H1 (cell line): ENCODE measurements at regions of chr22 and their contacts with region 1.

Region 1: GRCh38 chr22:41479671-41480396 is 10.9 kb downstream of the ACO2 start:
- DNase-seq: peak; percentile 21 to 61
- H3K4me3 ChIP-seq: peak overlapping the region in 2 of 4 experiments; percentile 0 to 11; a peak in 2 of 8 replicates
- H3K27ac ChIP-seq: peak overlapping the region; percentile 20; the same call in 1 of the 2 replicates
- H3K4me1 ChIP-seq: peaks cover 24 to 39% (median 26%) of the 10 kb centered on the region in 4 experiments
- H3K27me3 ChIP-seq: no peaks in the 10 kb centered on the region
- CTCF ChIP-seq: peak in 2 of 3 experiments; percentile 28 to 41; a peak in 2 of 4 replicates
- EP300 ChIP-seq: no peak
- POLR2A ChIP-seq: no peak
- RAD21 ChIP-seq: peak; percentile 17 to 21; a peak in 2 of 4 replicates

Region 2: DNA sequence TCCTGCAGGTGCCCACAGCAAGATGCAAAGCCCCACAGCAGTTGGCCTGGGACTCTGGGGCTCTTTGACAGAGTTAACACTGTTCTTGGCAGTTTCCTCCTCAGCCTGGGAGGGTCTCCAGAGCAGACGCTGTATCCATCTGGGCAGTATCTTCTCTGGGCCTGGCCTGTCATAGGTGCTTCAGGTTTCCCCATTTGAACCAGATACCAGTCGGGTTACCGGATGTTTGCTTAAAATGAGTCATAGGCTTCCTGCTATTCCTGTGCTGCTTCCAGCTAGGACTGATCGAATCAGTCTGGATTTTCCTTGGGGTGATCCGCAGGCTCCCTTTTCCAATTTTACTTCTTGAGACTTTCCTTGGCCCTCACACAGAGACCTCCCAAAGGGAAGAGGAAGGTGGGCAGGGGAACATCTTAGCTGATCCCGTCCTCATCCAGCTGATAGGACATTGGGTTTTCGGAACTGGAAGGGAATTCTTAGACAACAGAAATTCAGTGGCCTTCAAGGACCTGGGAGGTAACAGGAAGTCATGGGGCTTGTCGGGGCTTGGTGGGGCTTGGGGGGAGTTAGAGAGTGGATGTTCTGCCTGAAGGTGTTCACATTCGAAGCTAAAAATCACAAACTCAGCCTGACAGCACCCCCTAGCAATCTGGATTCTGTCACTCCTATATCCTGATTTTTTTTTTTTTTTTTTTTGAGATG is 191.4 kb before region 1 on chr22:
- CTCF ChIA-PET with region 1: no interaction called
- POLR2A ChIA-PET with region 1: no interaction called
- DNase-seq: no peak
- H3K4me3 ChIP-seq: no peak overlapping the region
- H3K27ac ChIP-seq: peak overlapping the region; percentile 55; the same call in 1 of the 2 replicates
- H3K4me1 ChIP-seq: peaks cover 2 to 20% (median 10%) of the 10 kb centered on the region in 4 experiments; a peak in 6 of 7 replicates
- H3K27me3 ChIP-seq: no peaks in the 10 kb centered on the region
- CTCF ChIP-seq: no peak
- EP300 ChIP-seq: no peak
- POLR2A ChIP-seq: no peak
- RAD21 ChIP-seq: no peak

Region 3: GRCh38 chr22:41320416-41321240 is 159.2 kb before region 1 on chr22:
- CTCF ChIA-PET with region 1: no interaction called
- POLR2A ChIA-PET with region 1: no interaction called
- DNase-seq: no peak
- H3K4me3 ChIP-seq: no peak overlapping the region
- H3K27ac ChIP-seq: no peak overlapping the region
- H3K4me1 ChIP-seq: no peaks in the 10 kb centered on the region
- H3K27me3 ChIP-seq: no peaks in the 10 kb centered on the region
- CTCF ChIP-seq: no peak
- EP300 ChIP-seq: no peak
- POLR2A ChIP-seq: no peak
- RAD21 ChIP-seq: no peak

Region 4: GRCh38 chr22:41501209-41501608 is 21.4 kb after region 1 on chr22:
- CTCF ChIA-PET with region 1: interaction called, 59 read pairs
- POLR2A ChIA-PET with region 1: interaction called, 13 read pairs
- DNase-seq: no peak
- H3K4me3 ChIP-seq: no peak overlapping the region
- H3K27ac ChIP-seq: no peak overlapping the region
- H3K4me1 ChIP-seq: no peaks in the 10 kb centered on the region
- H3K27me3 ChIP-seq: no peaks in the 10 kb centered on the region
- CTCF ChIP-seq: peak; percentile 57 to 64 (median 59)
- EP300 ChIP-seq: no peak
- POLR2A ChIP-seq: no peak
- RAD21 ChIP-seq: peak; percentile 75 to 78

Region 5: GRCh38 chr22:41508770-41509170 is 28.9 kb after region 1 on chr22:
- CTCF ChIA-PET with region 1: interaction called, 18 read pairs
- POLR2A ChIA-PET with region 1: interaction called, 5 read pairs
- DNase-seq: no peak
- H3K4me3 ChIP-seq: no peak overlapping the region
- H3K27ac ChIP-seq: no peak overlapping the region
- H3K4me1 ChIP-seq: peaks cover 4 to 15% (median 13%) of the 10 kb centered on the region in 4 experiments
- H3K27me3 ChIP-seq: no peaks in the 10 kb centered on the region
- CTCF ChIP-seq: peak in 1 of 3 experiments; percentile 9; a peak in 1 of 4 replicates
- EP300 ChIP-seq: no peak
- POLR2A ChIP-seq: no peak
- RAD21 ChIP-seq: no peak; a peak in 1 of 4 replicates

Region 6: DNA sequence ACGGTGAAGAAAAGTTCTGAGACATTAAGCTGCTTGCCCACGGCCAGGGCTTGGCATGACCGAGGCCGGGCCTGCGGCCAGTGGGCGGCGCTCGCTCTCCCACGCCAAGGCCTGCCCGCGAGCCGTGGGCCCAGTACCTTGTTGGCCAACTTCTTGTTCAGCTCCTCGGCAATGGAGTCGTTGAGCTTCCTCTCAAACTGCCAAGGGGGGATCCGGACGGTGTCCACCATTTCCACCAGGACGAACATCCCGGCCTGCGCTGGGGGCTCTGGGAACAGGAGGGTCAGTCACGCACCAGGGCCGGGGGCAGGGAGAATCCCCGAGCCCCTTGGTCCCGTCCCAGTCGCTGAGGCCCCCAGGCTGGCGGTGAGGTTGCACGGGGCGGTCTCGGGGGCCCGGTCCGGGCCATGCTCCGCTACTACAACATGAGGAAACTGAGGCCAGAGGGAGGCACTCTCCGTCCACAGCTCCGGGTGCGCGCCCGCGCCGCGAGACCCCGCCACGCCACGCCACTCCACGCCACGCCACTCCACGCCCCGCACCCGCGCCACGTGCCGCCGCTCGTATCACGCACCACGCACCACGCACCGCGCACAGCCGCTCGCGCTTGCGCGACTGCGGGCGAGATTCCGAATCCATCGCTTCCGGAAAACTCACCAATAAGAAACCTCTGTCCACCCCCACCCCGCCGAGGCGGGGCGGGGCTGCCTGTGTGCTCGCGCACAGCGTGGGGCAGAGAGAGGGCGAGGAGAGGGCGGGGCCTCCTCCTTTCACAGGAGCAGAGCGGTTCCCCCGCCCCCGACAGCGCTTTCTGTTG is 64.2 kb after region 1 on chr22 and contains the start of gene POLR3H:
- CTCF ChIA-PET with region 1: no interaction called
- POLR2A ChIA-PET with region 1: no interaction called
- DNase-seq: peak; percentile 91 to 98
- H3K4me3 ChIP-seq: peak within 1 kb of the TSS; percentile 51 to 90 (median 82)
- H3K27ac ChIP-seq: peak within 1 kb of the TSS; percentile 65; the same call in 1 of the 2 replicates
- H3K4me1 ChIP-seq: peaks cover 0 to 5% (median under 1%) of the 10 kb centered on the region in 4 experiments; a peak in 3 of 7 replicates
- H3K27me3 ChIP-seq: 0 out of 7 replicates have a peak, but pooled peaks cover 0 to 2% (median 0%) of the 10 kb centered on the region in 4 experiments
- CTCF ChIP-seq: peak; percentile 34 to 61 (median 45); a peak in 3 of 4 replicates
- EP300 ChIP-seq: no peak
- POLR2A ChIP-seq: peak in 1 of 2 experiments; percentile 58; a peak in 2 of 3 replicates
- RAD21 ChIP-seq: peak in 1 of 2 experiments; percentile 29; a peak in 2 of 4 replicates
- total RNA-seq, gene POLR3H: 34.5 and 39.2 TPM in 2 replicates

Region 7: DNA sequence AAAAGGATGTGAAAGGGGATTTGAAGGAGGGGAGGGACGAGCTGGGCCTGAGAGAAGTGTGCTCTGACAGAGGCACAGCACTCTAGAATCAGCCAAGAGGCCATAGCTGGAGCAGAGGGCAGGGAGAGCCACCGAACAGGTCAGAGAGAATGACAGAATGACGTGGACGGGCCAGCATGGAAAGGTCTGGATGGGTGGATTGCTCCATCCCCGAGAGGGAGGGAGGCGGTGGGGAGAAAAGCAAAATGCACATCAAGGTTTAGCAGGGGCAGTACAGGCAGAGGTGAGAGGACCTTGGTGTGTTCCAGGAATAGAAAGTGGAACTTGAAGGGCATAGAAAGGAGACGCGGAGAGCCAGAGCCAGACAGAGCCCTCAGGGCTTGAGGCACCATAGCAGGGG is 102.9 kb after region 1 on chr22:
- CTCF ChIA-PET with region 1: no interaction called
- POLR2A ChIA-PET with region 1: no interaction called
- DNase-seq: no peak
- H3K4me3 ChIP-seq: no peak overlapping the region
- H3K27ac ChIP-seq: no peak overlapping the region
- H3K4me1 ChIP-seq: no peaks in the 10 kb centered on the region; a peak in 1 of 7 replicates
- H3K27me3 ChIP-seq: no peaks in the 10 kb centered on the region
- CTCF ChIP-seq: no peak
- EP300 ChIP-seq: no peak
- POLR2A ChIP-seq: no peak
- RAD21 ChIP-seq: no peak